H1 (cell line): ENCODE measurements at regions of chr1 and their contacts with region 1.

Region 1: GRCh38 chr1:115052454-115053083 is 22.9 kb downstream of the TSHB start:
- DNase-seq: peak in 1 of 2 experiments; percentile 69
- H3K4me3 ChIP-seq: no peak overlapping the region
- H3K27ac ChIP-seq: no peak overlapping the region
- H3K4me1 ChIP-seq: peaks cover 0 to 6% (median 2%) of the 10 kb centered on the region in 4 experiments; a peak in 3 of 7 replicates
- H3K27me3 ChIP-seq: no peaks in the 10 kb centered on the region
- CTCF ChIP-seq: peak in 2 of 3 experiments; percentile 77 to 83; a peak in 3 of 4 replicates
- EP300 ChIP-seq: no peak
- POLR2A ChIP-seq: no peak
- RAD21 ChIP-seq: peak; percentile 68 to 75

Region 2: DNA sequence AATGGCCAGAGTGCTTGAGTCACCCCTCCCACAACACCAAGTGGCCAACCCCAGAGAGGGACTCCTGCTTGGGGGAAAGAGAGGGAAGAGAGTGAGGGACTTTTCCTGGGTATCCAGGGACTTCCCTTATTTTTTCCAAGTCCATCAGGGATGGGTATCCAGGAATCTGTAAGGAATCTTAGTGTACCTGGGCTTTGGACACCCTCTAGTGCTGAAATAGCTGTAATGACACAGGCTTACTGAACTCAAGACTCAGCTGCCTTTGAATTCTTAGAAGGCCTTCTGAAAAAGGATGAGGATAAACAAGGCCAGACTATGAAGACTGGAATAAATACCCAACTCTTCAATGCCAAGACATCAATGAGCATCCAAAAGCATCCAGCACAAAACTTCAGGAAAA is 10.9 kb before region 1 on chr1:
- CTCF ChIA-PET with region 1: interaction called, 106 read pairs
- POLR2A ChIA-PET with region 1: no interaction called
- DNase-seq: no peak
- H3K4me3 ChIP-seq: no peak overlapping the region
- H3K27ac ChIP-seq: no peak overlapping the region
- H3K4me1 ChIP-seq: no peaks in the 10 kb centered on the region
- H3K27me3 ChIP-seq: no peaks in the 10 kb centered on the region
- CTCF ChIP-seq: peak in 2 of 3 experiments; percentile 58 to 70; a peak in 3 of 4 replicates
- EP300 ChIP-seq: no peak
- POLR2A ChIP-seq: no peak
- RAD21 ChIP-seq: peak; percentile 80 to 86

Region 3: DNA sequence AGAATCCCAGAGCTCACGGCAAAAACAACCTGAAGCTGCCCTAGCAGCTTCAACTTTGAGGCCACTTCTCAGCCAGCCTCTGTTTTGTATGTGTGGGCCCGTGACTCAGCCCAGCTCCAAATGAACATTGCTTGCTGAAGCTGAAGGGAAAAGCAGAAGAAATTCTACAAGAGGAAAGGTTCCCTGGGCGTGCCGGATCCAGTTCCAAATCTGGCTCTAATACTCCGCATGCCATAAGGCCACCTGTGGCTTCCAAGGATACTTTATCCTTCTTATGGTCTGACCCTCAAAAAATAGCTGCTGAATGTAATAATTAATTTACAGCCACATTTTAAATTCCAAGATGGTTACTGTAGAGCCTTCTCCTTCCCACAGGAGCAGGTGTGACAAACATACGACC is 12.5 kb after region 1 on chr1:
- CTCF ChIA-PET with region 1: interaction called, 27 read pairs
- POLR2A ChIA-PET with region 1: no interaction called
- DNase-seq: no peak
- H3K4me3 ChIP-seq: no peak overlapping the region
- H3K27ac ChIP-seq: no peak overlapping the region
- H3K4me1 ChIP-seq: no peaks in the 10 kb centered on the region; a peak in 1 of 7 replicates
- H3K27me3 ChIP-seq: no peaks in the 10 kb centered on the region
- CTCF ChIP-seq: no peak
- EP300 ChIP-seq: no peak
- POLR2A ChIP-seq: no peak
- RAD21 ChIP-seq: no peak

Region 4: GRCh38 chr1:115073298-115074087 is 20.9 kb after region 1 on chr1:
- CTCF ChIA-PET with region 1: interaction called, 17 read pairs
- POLR2A ChIA-PET with region 1: interaction called, 4 read pairs
- DNase-seq: no peak
- H3K4me3 ChIP-seq: no peak overlapping the region
- H3K27ac ChIP-seq: no peak overlapping the region
- H3K4me1 ChIP-seq: no peaks in the 10 kb centered on the region; a peak in 1 of 7 replicates
- H3K27me3 ChIP-seq: no peaks in the 10 kb centered on the region
- CTCF ChIP-seq: no peak
- EP300 ChIP-seq: no peak
- POLR2A ChIP-seq: no peak
- RAD21 ChIP-seq: no peak

Region 5: GRCh38 chr1:115082949-115083348 is 30.4 kb after region 1 on chr1:
- CTCF ChIA-PET with region 1: interaction called, 23 read pairs
- POLR2A ChIA-PET with region 1: no interaction called
- DNase-seq: no peak
- H3K4me3 ChIP-seq: no peak overlapping the region
- H3K27ac ChIP-seq: no peak overlapping the region
- H3K4me1 ChIP-seq: peaks cover 0 to 13% (median 8%) of the 10 kb centered on the region in 4 experiments; a peak in 4 of 7 replicates
- H3K27me3 ChIP-seq: no peaks in the 10 kb centered on the region
- CTCF ChIP-seq: no peak
- EP300 ChIP-seq: no peak
- POLR2A ChIP-seq: no peak
- RAD21 ChIP-seq: no peak

Region 6: DNA sequence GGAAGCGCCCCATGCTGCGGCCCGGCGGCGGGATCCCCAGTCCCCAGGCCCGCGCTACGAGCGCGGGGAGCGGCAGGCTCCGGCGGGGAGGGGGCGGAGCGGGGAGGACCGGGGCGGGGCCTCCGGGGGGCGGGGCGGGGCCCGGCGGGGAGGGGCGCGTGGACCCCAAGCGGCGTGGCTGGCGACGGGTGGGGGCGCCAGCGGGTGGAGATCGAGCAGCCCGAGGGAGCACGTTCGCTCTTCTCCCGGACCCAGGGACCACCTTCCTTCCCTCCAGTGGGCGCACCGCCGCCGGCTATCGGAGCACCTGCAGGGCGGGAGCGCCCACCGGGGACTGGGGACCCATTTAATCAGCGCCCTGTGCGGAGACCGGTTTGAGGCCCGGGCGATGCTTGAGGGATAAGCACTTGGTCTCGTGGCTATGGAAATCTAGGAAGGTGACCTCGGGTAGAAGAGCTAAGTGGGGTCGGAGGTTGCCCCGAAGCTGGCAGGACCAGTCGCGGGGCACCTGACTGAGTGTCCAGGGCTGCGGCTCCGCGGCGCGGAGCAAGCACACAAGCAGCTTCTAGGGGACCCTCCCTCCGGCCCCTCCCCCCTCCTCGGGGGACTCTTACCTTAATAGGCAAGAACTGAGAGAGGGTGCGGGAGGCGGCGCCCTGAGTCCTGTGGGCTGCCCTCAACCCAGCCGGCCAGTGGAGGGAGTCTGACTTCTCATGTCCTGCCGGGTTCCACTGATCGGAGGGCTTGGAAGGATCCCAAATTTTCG is 37.0 kb after region 1 on chr1 and contains the start of gene TSPAN2:
- CTCF ChIA-PET with region 1: interaction called, 23 read pairs
- POLR2A ChIA-PET with region 1: interaction called, 4 read pairs
- DNase-seq: peak; percentile 90 to 91
- H3K4me3 ChIP-seq: peak within 1 kb of the TSS; percentile 82 to 100 (median 93)
- H3K27ac ChIP-seq: peak within 1 kb of the TSS; percentile 91
- H3K4me1 ChIP-seq: peaks cover 4 to 10% (median 4%) of the 10 kb centered on the region in 4 experiments; a peak in 5 of 7 replicates
- H3K27me3 ChIP-seq: no peaks in the 10 kb centered on the region; a peak in 2 of 7 replicates
- CTCF ChIP-seq: peak; percentile 51 to 56 (median 52)
- EP300 ChIP-seq: no peak
- POLR2A ChIP-seq: peak; percentile 93 to 95
- RAD21 ChIP-seq: peak; percentile 25 to 41; a peak in 3 of 4 replicates
- total RNA-seq, gene TSPAN2: 13.0 and 14.2 TPM in 2 replicates

Region 7: DNA sequence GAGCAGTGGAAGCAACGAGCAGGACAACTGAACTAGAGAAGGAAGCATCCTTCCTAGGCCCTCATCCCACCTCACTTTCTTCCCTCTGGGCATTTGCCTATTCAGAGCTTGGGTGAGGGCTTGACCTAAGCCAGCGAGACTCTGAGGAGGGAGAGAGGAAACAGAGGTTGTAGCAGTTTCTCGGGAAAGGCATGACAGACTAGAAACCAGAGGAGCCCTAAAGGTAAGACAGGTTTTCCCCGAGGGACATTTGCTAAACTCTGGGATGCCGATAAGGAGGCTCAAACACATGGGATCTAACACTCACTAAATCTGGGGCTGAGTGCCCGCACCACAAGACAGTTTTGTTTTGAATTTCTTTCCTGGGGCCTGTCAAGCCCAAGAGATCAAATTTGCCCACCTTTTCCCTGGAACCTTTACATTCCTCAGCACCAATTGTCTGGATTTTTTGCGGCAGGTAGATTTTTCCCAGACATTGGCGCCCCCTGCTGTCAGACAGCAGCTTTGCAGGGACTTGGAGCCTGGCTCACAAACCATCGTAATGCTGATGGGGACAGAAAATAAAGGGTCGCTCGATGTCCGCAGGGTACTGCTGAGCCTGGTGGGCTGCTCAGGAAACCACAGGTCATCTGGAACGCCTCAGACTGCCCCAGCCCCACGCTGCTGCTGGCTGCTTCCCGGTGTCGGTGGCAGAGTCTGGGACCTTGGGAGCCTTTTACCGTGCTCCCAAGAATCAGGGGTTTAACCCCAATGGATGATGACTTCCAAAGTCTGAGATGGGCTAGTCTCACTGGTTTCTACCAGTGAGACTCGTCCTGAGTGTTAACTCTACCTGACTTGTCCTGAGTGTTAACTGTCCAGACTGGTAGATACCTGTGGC is 60.2 kb after region 1 on chr1:
- CTCF ChIA-PET with region 1: interaction called, 42 read pairs
- POLR2A ChIA-PET with region 1: no interaction called
- DNase-seq: peak in 1 of 2 experiments; percentile 89
- H3K4me3 ChIP-seq: no peak overlapping the region
- H3K27ac ChIP-seq: no peak overlapping the region
- H3K4me1 ChIP-seq: peaks cover 0 to 2% (median 1%) of the 10 kb centered on the region in 4 experiments; a peak in 4 of 7 replicates
- H3K27me3 ChIP-seq: no peaks in the 10 kb centered on the region
- CTCF ChIP-seq: peak; percentile 79 to 83 (median 82)
- EP300 ChIP-seq: no peak
- POLR2A ChIP-seq: no peak
- RAD21 ChIP-seq: peak; percentile 81 to 87